Cardiac septum (tissue), 1 donor: ENCODE measurements at regions of chr2 and their contacts with region 1.

Region 1: GRCh38 chr2:231925303-231926179 is 655 bp downstream of the NPPC start:
- DNase-seq: peak; percentile 88

Region 2: GRCh38 chr2:231941673-231942072 is 16.1 kb after region 1 on chr2:
- intact Hi-C with region 1: no loop called
- DNase-seq: peak; percentile 33

Region 3: GRCh38 chr2:232142049-232142448 is 216.5 kb after region 1 on chr2:
- intact Hi-C with region 1: loop called (anchors 1 kb)
- DNase-seq: no peak

Region 4: DNA sequence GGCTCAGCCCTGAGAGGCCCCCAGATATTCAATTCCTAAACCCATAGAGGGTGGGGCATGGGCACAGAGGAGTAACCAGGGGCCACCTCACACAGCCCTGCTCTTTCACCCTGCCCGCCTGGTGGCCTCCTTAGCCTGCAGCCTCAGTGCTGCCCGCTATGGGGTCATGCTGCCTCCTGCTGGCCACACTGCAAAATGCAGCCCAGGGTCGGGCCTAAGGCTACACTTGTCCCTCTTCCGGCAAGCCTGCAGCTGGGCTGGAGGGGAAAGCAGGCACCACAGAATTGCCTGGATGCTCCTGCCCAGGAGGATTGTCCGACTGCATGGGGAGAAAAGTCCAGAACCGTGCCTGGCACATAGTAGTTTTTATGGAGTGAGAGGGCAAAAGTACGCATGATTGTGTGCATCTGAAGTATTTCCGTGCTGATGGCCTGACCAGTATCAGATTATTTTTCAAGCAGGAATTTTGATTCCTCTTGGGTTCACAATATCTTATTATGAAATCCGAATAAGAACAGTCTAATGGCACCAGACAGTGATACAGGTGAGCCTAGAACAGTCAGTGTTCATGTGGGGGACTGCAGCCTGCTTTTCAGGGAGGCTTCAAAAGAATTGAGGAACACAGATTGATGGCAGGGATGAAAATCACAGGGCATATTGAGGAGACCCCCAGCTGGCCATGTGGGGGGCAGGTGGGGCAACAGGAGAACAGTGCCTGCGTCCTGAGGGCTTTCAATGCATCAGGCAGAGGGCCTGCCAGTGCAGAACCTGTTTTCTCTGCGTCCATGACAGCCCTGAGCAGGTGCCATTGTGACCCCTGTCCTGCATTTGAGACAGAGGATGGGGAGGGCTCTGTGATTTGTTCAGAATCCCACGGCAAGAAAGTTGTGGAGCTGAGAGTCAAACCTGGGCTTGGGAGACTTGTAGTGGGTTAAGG is 401.8 kb after region 1 on chr2:
- intact Hi-C with region 1: loop called (anchors 5 kb)
- DNase-seq: peak; percentile 87